PC-3 (cell line): ENCODE measurements at regions of chr4 and their contacts with region 1.

Region 1: GRCh38 chr4:101114936-101115372 is 232.4 kb downstream of the PPP3CA start:
- DNase-seq: peak; percentile 86
- ATAC-seq: peak; percentile 97
- H3K4me3 ChIP-seq: no peak overlapping the region; the same call in 1 of the 2 replicates
- H3K27ac ChIP-seq: peak overlapping the region; percentile 98
- H3K4me1 ChIP-seq: peaks cover 23% of the 10 kb centered on the region
- H3K27me3 ChIP-seq: no peaks in the 10 kb centered on the region
- CTCF ChIP-seq: no peak

Region 2: DNA sequence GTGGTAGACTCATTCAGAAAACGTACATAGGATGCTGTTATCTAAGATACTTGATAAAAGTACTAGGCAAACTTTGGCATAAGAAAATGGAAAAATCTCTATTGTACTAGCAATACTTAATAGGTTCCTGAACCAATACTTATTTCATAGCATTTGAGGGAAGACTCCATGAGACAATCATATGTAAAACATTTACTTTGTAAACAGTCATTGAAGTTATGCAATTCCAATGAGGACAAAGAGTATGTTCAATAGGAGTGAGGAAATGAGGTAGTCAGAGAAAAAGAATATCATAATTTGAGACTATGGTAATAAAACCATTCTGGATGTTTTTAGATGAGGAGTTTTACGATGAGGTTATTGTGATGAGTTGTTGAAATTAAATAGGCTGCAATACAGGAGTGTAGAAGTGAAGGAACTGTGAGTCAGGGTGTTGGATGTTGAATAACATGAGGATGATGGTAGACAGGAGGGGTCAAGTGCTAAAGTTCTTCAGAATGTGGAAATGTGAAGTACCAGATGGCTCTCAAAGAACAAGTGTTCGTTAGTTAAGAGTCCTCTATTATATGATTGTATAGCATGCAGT is 165.5 kb before region 1 on chr4:
- CTCF ChIA-PET with region 1: no interaction called
- POLR2A ChIA-PET with region 1: no interaction called
- intact Hi-C with region 1: loop called (anchors 1 kb)
- DNase-seq: peak; percentile 33
- ATAC-seq: peak; percentile 60
- H3K4me3 ChIP-seq: no peak overlapping the region
- H3K27ac ChIP-seq: no peak overlapping the region
- H3K4me1 ChIP-seq: no peaks in the 10 kb centered on the region
- H3K27me3 ChIP-seq: no peaks in the 10 kb centered on the region
- CTCF ChIP-seq: no peak

Region 3: DNA sequence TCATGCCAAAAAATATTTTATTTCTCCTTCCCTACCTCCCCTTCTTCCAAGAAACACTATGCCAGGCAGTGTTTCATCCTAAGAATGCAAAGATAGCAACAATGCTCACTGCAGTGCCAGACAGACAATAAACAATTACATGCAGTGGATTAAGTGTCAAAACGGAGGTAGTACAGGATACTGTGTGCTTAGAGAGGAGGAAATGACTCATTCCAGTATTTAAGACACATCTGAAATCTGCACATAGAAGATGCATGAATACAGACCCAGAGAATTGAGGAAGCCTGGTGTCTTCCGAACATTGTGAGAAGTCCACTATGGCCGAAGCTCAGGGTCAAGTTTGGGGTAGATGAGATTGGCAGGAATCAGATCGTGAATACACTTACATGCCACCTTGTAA is 94.0 kb before region 1 on chr4:
- CTCF ChIA-PET with region 1: no interaction called
- POLR2A ChIA-PET with region 1: no interaction called
- intact Hi-C with region 1: loop called (anchors 5 kb)
- DNase-seq: peak; percentile 69
- ATAC-seq: peak; percentile 87
- H3K4me3 ChIP-seq: no peak overlapping the region
- H3K27ac ChIP-seq: peak overlapping the region; percentile 83
- H3K4me1 ChIP-seq: peaks cover 29% of the 10 kb centered on the region
- H3K27me3 ChIP-seq: no peaks in the 10 kb centered on the region
- CTCF ChIP-seq: no peak

Region 4: DNA sequence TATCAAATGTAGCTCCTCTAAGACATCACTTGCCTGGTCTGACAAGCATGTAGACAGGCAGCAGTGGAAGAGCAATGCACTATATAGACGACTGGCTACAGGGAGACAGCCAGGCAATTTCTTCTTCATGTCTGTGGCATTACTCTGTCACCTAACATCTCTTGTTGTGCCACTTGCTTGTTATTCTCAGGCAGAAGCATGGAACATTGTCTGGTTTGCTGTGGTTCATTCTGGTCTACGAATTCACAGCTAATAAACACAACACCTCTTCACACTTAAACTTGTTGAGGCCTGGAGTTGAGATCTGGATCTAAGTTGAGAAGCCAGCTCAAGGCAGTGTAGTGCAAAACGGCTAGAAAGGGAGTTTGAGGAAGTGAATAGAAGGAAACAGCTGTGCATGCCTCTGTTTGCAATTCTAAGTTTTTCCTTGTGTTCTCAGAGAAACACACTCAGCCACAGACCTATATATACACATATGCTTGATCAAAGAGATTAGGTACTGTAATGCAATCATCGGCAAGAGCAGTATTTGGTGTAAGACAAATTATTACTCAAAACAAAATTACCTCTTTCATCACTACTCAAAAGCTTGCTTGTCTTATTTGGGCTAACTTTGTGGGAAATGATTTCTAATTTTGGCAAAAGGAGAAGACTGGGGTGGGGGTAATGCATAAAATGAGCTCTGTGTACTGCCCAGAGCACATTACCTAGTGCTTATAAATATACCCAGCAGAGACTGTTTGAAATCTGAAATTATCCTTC is 11.4 kb before region 1 on chr4:
- CTCF ChIA-PET with region 1: no interaction called
- POLR2A ChIA-PET with region 1: no interaction called
- intact Hi-C with region 1: loop called (anchors 1 kb)
- DNase-seq: no peak
- ATAC-seq: no peak
- H3K4me3 ChIP-seq: no peak overlapping the region
- H3K27ac ChIP-seq: no peak overlapping the region
- H3K4me1 ChIP-seq: peaks cover 14% of the 10 kb centered on the region
- H3K27me3 ChIP-seq: no peaks in the 10 kb centered on the region
- CTCF ChIP-seq: no peak

Region 5: DNA sequence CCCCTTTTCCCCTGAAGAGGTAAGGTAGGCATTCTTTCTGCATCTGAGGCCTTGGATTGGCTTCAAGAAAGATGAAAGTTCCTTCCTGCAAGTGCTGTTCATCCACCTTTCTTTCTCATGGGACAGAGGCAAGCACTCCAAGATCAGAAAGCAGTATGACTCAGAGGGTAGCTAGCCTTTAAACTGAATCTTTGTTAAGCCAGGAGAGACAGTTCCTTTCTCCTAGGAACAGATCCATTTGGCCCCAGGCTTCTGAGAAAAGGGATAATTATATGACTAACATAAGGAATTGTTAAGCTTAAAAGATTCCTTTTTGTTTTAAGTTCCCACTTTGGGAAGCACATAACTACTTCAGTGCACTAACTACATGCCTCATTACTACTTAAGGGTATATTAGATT is 40.4 kb after region 1 on chr4:
- CTCF ChIA-PET with region 1: no interaction called
- POLR2A ChIA-PET with region 1: no interaction called
- intact Hi-C with region 1: loop called (anchors 5 kb)
- DNase-seq: peak; percentile 87
- ATAC-seq: peak; percentile 93
- H3K4me3 ChIP-seq: no peak overlapping the region
- H3K27ac ChIP-seq: peak overlapping the region; percentile 100
- H3K4me1 ChIP-seq: peaks cover 29% of the 10 kb centered on the region
- H3K27me3 ChIP-seq: no peaks in the 10 kb centered on the region
- CTCF ChIP-seq: no peak